HepG2 (cell line): ENCODE measurements at regions of chr3 and their contacts with region 1.

Region 1: GRCh38 chr3:31377045-31377642 is 155.6 kb upstream of the STT3B start:
- DNase-seq: peak; percentile 100
- ATAC-seq: peak; percentile 98
- H3K4me3 ChIP-seq: no peak overlapping the region; a peak in 1 of 6 replicates
- H3K27ac ChIP-seq: peak overlapping the region; percentile 74
- H3K4me1 ChIP-seq: peaks cover 50% of the 10 kb centered on the region
- H3K27me3 ChIP-seq: no peaks in the 10 kb centered on the region; a peak in 1 of 5 replicates
- CTCF ChIP-seq: 0 out of 2 replicates have a peak, but pooled peaks have one; percentile 12
- EP300 ChIP-seq: peak; percentile 99 to 100
- POLR2A ChIP-seq: no peak
- RAD21 ChIP-seq: peak; percentile 44; the same call in 1 of the 2 replicates

Region 2: GRCh38 chr3:31294430-31295149 is 82.6 kb before region 1 on chr3:
- CTCF ChIA-PET with region 1: no interaction called
- POLR2A ChIA-PET with region 1: no interaction called
- in situ Hi-C with region 1: loop called (anchors 5 kb)
- intact Hi-C with region 1: no loop called
- DNase-seq: no peak
- ATAC-seq: no peak
- H3K4me3 ChIP-seq: no peak overlapping the region
- H3K27ac ChIP-seq: peak overlapping the region; percentile 36
- H3K4me1 ChIP-seq: peaks cover 62% of the 10 kb centered on the region
- H3K27me3 ChIP-seq: no peaks in the 10 kb centered on the region
- CTCF ChIP-seq: no peak
- EP300 ChIP-seq: no peak
- POLR2A ChIP-seq: no peak
- RAD21 ChIP-seq: no peak

Region 3: DNA sequence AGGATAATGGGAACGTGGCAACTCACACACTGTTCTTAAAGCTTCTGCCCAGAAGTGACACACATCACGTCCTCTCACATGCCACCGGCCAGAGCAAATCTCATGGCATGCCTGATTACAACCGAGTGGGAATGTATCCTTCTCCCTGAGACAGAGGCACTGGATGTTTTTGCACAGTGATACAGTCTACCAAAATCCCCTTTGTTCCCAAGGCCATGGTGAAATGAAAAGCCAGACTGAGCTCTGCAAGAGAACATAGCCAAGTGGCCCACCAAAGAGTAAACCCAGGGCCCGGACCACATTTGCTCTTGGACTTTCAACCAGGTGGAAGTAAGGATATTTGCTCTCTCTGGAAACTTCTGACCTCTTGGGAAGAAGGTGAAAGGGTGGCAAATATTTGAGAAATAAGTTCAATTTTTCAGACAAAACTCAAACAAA is 30.6 kb before region 1 on chr3:
- CTCF ChIA-PET with region 1: no interaction called
- POLR2A ChIA-PET with region 1: interaction called, 6 read pairs
- in situ Hi-C with region 1: no loop called
- intact Hi-C with region 1: loop called (anchors 1 kb)
- DNase-seq: peak; percentile 87
- ATAC-seq: peak; percentile 99
- H3K4me3 ChIP-seq: 0 out of 6 replicates have a peak overlapping the region, but pooled peaks of 1 of the 3 experiments have one; percentile 13
- H3K27ac ChIP-seq: peak overlapping the region; percentile 80
- H3K4me1 ChIP-seq: peaks cover 49% of the 10 kb centered on the region
- H3K27me3 ChIP-seq: no peaks in the 10 kb centered on the region
- CTCF ChIP-seq: no peak; the same call in 1 of the 2 replicates
- EP300 ChIP-seq: peak in 1 of 2 experiments; percentile 95; a peak in 2 of 4 replicates
- POLR2A ChIP-seq: no peak
- RAD21 ChIP-seq: no peak

Region 4: GRCh38 chr3:31412832-31413231 is 35.7 kb after region 1 on chr3:
- CTCF ChIA-PET with region 1: no interaction called
- POLR2A ChIA-PET with region 1: no interaction called
- in situ Hi-C with region 1: no loop called
- intact Hi-C with region 1: no loop called
- DNase-seq: no peak
- ATAC-seq: no peak
- H3K4me3 ChIP-seq: no peak overlapping the region
- H3K27ac ChIP-seq: no peak overlapping the region
- H3K4me1 ChIP-seq: no peaks in the 10 kb centered on the region
- H3K27me3 ChIP-seq: no peaks in the 10 kb centered on the region
- CTCF ChIP-seq: no peak
- EP300 ChIP-seq: no peak
- POLR2A ChIP-seq: no peak
- RAD21 ChIP-seq: no peak